ENCODE measurements at regions of chr10 and their contacts with region 1.

Region 1: GRCh38 chr10:31620226-31621151 is 301.5 kb downstream of the ZEB1 start:
- H3K4me3 Mint-ChIP-seq: no peak overlapping the region
- H3K27ac Mint-ChIP-seq: peak overlapping the region; percentile 81
- H3K4me1 Mint-ChIP-seq: peaks cover 88% of the 10 kb centered on the region
- H3K27me3 Mint-ChIP-seq: no peaks in the 10 kb centered on the region

Region 2: DNA sequence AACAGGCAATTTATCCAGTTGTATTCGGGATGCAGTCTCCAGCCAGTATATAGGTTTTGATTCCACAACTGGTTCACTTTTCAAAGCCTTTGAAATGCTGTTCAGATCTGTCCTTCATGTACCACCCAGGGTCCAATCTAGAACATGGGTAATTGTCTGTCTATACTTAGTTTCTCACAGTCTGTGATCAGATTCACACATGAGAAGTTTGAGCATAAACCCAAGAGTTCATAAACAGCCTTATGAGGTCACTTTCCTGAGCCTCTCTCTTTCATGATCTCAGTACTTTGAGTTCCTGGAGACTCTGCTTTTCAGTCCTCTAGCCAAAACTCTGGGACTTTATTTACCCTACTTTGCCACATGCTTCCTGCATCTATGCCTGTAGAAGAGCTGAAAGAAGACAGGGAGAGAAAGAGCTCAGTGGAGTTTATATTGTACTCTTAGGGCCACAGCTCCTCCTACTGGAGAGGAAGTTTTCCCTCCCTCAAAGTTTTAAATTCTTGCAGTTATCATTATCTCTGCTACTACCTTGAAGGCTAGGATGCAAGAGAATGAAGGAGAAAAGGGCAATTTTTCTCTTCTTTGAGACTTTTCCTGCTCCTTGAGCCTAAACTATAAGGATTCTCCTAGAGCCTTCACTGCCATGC is 129.5 kb before region 1 on chr10:
- intact Hi-C with region 1: no loop called
- H3K4me3 Mint-ChIP-seq: no peak overlapping the region
- H3K27ac Mint-ChIP-seq: no peak overlapping the region
- H3K4me1 Mint-ChIP-seq: no peaks in the 10 kb centered on the region
- H3K27me3 Mint-ChIP-seq: no peaks in the 10 kb centered on the region

Region 3: DNA sequence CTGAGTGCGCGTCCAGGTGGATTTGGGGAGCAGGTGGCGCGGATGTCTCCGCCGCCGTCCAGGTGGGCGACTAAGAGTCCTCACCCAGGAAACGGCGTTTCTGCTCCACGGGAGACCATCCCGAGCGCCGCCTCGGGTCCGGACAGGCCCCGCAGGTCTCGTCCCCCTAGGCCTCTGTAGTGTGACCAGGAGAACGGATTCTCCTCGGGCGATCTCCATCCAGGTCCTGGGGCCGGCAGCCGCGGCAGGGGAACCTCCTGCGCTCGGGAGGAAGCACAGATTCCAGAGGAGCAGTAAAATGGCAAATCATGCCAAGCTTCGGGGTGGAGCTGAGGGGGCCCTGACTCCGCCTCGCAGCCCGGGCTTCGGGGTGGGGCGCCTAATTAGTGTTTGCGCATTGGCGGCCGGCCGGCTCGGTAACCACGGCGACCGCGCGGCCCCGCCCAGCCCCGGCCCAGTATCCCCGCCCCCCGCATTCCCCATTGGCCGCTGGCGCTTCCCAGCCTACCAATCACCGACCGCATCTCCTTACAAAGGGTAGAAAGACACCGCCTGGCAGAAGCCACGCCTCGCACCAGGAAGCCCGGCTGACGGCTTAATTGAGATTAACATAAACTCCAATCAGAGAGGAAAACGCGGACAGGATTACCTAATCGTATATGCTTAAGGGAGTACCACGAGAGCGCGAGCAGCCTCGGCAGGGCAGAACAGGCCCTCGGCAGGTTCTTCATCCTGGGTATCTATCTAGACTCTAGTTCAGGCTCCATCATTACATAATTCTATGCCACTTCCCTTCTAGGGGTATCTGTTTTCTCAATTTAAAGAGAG is 139.5 kb after region 1 on chr10:
- intact Hi-C with region 1: loop called (anchors 10 kb)
- H3K4me3 Mint-ChIP-seq: peak overlapping the region; percentile 90
- H3K27ac Mint-ChIP-seq: peak overlapping the region; percentile 93
- H3K4me1 Mint-ChIP-seq: peaks cover 32% of the 10 kb centered on the region
- H3K27me3 Mint-ChIP-seq: no peaks in the 10 kb centered on the region